Endothelial cell of umbilical vein (primary cell): ENCODE measurements at regions of chr1 and their contacts with region 1.

Region 1: GRCh38 chr1:150259758-150260669 is 2.4 kb downstream of the CA14 start:
- DNase-seq: peak; percentile 9
- H3K4me3 ChIP-seq: no peak overlapping the region
- H3K27ac ChIP-seq: no peak overlapping the region
- H3K4me1 ChIP-seq: peaks cover 7% of the 10 kb centered on the region
- H3K27me3 ChIP-seq: peaks cover 15 to 27% of the 10 kb centered on the region in 2 experiments
- CTCF ChIP-seq: no peak
- POLR2A ChIP-seq: no peak

Region 2: DNA sequence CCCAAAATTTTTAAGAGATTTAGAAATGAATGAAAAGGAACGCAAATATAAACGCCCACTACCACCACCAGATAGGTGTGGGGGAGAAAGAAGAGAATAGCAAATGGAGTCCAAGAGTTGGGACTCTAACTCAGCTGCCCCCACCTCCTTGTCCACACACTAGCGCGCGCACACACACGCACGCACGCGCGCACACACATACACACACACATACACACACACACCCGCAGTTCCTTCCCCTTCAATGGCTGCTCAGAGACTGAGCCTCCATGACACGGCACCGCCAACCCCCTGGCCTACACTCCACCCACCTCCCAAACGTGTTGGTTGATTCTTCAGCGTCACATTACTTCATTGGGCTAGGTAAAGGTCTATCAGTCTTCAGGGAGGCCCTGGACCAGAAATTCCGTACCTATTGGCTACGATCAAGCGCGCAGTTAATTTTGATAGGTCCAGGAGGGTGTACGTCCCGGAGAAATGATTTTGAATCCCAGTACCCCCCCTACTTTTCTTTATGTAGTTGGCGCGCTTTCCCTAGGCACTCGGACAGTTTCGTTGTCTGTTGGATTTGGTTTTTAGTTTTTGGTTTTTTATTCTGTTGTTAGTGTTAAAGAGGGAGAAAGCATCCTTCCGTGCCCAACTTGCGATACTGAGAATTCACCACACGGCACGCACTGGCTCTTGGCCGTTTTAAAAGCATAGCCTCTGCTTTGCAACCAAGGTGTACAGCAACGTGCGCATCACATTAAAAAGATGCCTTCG is 24.0 kb before region 1 on chr1 and contains the start of gene ANP32E:
- CTCF ChIA-PET with region 1: interaction called, 10 read pairs
- POLR2A ChIA-PET with region 1: no interaction called
- dilution Hi-C with region 1: no loop called
- intact Hi-C with region 1: no loop called
- DNase-seq: peak; percentile 99
- H3K4me3 ChIP-seq: peak within 1 kb of the TSS; percentile 72 to 95 (median 86)
- H3K27ac ChIP-seq: peak within 1 kb of the TSS; percentile 61
- H3K4me1 ChIP-seq: peaks cover 11% of the 10 kb centered on the region
- H3K27me3 ChIP-seq: no peaks in the 10 kb centered on the region
- CTCF ChIP-seq: no peak
- POLR2A ChIP-seq: peak; percentile 98
- total RNA-seq, gene ANP32E: 53.4 and 57.9 TPM in 2 replicates

Region 3: DNA sequence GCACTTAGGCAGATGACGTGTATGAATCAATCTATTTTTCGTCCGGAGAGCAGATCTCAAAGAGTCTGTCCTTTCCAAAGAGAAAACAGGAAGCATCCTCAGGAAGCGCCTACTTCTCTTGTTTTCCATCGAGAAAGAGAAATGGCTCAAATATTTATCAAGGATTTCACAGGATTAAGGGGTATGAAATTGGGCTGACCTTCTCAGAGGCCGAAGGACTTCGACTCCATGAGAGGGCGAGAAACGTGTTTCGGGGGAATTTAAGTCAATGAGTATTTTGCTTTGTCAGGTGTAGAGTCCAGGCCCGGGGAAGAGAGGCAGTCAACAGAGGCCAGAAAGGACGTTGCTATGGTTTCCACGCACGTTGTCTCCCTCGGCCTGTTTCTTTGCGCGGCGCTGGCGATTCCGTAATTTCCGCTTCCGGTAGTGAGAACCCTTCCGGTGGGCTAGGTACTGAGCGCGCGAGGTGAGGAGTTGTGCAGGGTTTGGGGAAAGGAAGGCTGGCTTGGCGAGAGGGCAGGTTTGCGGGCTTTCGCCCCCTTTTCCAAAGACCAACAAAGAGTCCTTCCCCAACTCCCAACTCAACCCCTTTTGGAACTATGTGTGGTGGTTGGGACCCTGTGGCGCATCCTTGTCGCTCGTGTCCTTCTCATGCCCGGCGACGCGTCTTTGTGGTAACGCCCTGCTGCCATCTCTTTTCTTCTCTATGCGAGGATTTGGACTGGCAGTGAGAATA is 33.6 kb after region 1 on chr1 and contains the start of gene MRPS21:
- CTCF ChIA-PET with region 1: interaction called, 14 read pairs
- POLR2A ChIA-PET with region 1: interaction called, 3 read pairs
- dilution Hi-C with region 1: no loop called
- intact Hi-C with region 1: no loop called
- DNase-seq: peak; percentile 94
- H3K4me3 ChIP-seq: peak within 1 kb of the TSS; percentile 25 to 90 (median 54)
- H3K27ac ChIP-seq: peak within 1 kb of the TSS; percentile 81
- H3K4me1 ChIP-seq: peaks cover 13% of the 10 kb centered on the region
- H3K27me3 ChIP-seq: no peaks in the 10 kb centered on the region
- CTCF ChIP-seq: no peak
- POLR2A ChIP-seq: peak; percentile 94
- total RNA-seq, gene MRPS21: 73.0 and 76.7 TPM in 2 replicates

Region 4: DNA sequence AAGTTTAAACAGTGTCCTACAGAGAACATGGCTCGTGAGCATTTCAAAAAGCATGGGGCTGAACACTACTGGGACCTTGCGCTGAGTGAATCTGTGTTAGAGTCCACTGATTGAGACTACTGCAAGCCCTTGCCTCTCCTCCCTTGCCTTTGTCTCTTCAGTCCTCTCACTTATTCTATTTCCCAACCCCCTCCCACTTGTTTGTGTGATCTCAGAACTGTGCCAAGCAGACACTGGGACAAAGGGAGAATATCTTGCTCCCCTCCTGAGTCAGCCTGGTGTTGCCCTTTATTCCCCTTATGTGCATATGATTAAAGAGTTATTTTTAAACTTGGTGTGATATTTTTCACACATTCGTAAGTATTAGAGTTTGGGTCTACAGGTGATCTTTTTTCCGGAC is 92.9 kb after region 1 on chr1:
- CTCF ChIA-PET with region 1: no interaction called
- POLR2A ChIA-PET with region 1: no interaction called
- dilution Hi-C with region 1: no loop called
- intact Hi-C with region 1: loop called (anchors 1 kb)
- DNase-seq: no peak
- H3K4me3 ChIP-seq: no peak overlapping the region
- H3K27ac ChIP-seq: no peak overlapping the region
- H3K4me1 ChIP-seq: no peaks in the 10 kb centered on the region
- H3K27me3 ChIP-seq: no peaks in the 10 kb centered on the region
- CTCF ChIP-seq: no peak
- POLR2A ChIP-seq: no peak

Region 5: DNA sequence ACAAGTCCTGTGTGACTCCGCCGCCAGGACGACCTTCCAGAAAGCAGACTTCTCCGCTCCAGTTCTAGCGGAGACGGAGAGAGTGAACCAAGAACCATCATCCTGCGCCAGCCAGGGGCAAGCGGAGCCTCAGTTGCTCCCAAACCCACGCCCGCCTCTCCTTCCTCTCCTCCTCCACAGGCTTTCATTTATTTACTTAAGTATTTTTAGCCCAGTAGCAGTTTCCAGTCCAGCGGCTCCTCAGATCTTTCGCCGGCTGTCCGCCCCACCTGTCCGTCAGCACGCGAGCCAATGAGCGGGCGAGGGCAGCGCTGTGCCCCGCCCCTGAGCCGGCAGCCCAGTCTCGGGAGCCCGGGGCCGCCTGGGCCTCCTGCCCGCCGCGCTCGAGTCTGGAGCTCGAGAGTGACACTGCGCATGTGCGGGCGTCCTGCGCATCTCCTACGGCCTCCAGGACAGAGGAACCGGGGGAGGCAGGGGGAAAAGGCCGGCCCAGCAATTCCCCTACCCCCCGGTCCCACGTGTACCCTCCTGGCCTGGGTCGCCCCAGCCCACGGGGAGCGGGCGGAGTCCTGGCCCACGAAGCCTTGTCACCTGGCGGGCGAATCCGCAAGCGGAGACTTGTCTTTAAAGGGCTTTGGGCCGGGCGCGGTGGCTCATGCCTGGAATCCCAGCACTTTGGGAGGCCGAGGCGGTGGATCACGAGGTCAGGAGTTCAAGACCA is 255.5 kb after region 1 on chr1 and contains the start of gene FALEC:
- CTCF ChIA-PET with region 1: interaction called, 10 read pairs
- POLR2A ChIA-PET with region 1: no interaction called
- dilution Hi-C with region 1: no loop called
- intact Hi-C with region 1: no loop called
- DNase-seq: peak; percentile 97
- H3K4me3 ChIP-seq: peak within 1 kb of the TSS; percentile 39 to 77 (median 48)
- H3K27ac ChIP-seq: peak within 1 kb of the TSS; percentile 9
- H3K4me1 ChIP-seq: peaks cover 6% of the 10 kb centered on the region
- H3K27me3 ChIP-seq: no peaks in the 10 kb centered on the region
- CTCF ChIP-seq: no peak
- POLR2A ChIP-seq: peak; percentile 44
- total RNA-seq, gene FALEC: not detected in 2 replicates

Region 6: DNA sequence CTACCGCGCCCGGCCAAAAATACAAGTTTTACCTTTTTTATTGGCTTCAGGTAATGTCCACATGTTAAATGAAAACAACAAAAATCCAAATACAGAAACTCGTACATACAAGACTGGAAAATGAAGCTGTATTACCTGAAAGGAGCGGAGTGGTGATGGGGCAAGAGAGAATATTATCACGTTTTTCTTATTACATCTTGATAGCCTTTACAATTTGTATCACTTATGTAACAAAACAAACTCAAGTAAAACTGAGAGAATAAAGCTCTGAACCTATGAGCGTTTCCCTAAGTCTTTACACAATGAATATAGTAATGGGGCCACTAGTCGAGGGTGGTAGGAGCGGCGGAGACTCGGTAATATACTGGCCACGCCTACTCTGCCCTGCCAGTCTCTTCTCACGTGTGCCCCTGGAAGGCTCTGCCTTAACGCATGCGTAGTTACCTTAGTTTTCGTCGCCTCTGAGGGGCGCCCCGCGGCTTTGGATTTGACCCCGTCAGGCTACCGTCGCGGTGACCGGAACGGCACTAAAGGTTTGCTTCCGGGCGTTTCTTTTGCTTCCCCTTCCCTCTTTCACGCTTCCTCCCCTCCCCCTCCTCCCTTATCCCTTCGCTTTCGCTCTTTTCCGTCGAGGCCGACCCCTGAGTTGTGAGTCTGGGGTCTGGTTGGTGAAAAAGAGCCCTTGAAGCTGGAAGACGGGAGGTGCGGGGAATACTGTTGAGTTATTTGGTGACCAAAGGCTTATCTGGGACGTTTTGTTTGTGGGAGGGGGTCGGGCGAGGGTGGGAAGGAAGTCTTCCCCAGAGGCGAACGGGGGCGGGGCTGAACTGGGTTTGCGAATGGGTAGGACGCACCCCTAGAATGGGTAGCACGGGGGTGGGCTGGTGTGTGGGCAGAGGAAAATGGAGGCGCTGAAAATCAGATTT is 666.1 kb after region 1 on chr1 and contains the start of gene SETDB1:
- CTCF ChIA-PET with region 1: no interaction called
- POLR2A ChIA-PET with region 1: no interaction called
- dilution Hi-C with region 1: no loop called
- intact Hi-C with region 1: loop called (anchors 5 kb)
- DNase-seq: peak; percentile 97
- H3K4me3 ChIP-seq: peak within 1 kb of the TSS; percentile 78 to 97 (median 91)
- H3K27ac ChIP-seq: peak within 1 kb of the TSS; percentile 84
- H3K4me1 ChIP-seq: peaks cover 6% of the 10 kb centered on the region
- H3K27me3 ChIP-seq: no peaks in the 10 kb centered on the region
- CTCF ChIP-seq: no peak
- POLR2A ChIP-seq: peak; percentile 72
- total RNA-seq, gene SETDB1: 42.0 and 49.2 TPM in 2 replicates